ENCODE measurements at regions of chr3 and their contacts with region 1.

Region 1: GRCh38 chr3:119676771-119677640 is at the start of gene COX17:
- DNase-seq: peak; percentile 98
- H3K4me3 Mint-ChIP-seq: peak within 1 kb of the TSS; percentile 87
- H3K27ac Mint-ChIP-seq: peak within 1 kb of the TSS; percentile 96
- H3K4me1 Mint-ChIP-seq: peaks cover 33% of the 10 kb centered on the region
- H3K27me3 Mint-ChIP-seq: no peaks in the 10 kb centered on the region
- total RNA-seq, gene COX17: 61.0 and 70.0 TPM in 2 replicates

Region 2: GRCh38 chr3:118884748-118885206 is 792.2 kb before region 1 on chr3:
- intact Hi-C with region 1: loop called (anchors 2 kb)
- DNase-seq: peak; percentile 92
- H3K4me3 Mint-ChIP-seq: no peak overlapping the region
- H3K27ac Mint-ChIP-seq: no peak overlapping the region
- H3K4me1 Mint-ChIP-seq: peaks cover 2% of the 10 kb centered on the region
- H3K27me3 Mint-ChIP-seq: peaks cover 19% of the 10 kb centered on the region

Region 3: GRCh38 chr3:119145500-119146191 is 531.4 kb before region 1 on chr3 and contains the start of gene TEX55:
- intact Hi-C with region 1: loop called (anchors 2 kb)
- DNase-seq: peak; percentile 66
- H3K4me3 Mint-ChIP-seq: no peak within 1 kb of the TSS
- H3K27ac Mint-ChIP-seq: no peak within 1 kb of the TSS
- H3K4me1 Mint-ChIP-seq: peaks cover 2% of the 10 kb centered on the region
- H3K27me3 Mint-ChIP-seq: no peaks in the 10 kb centered on the region
- total RNA-seq, gene TEX55: not detected in 2 replicates

Region 4: DNA sequence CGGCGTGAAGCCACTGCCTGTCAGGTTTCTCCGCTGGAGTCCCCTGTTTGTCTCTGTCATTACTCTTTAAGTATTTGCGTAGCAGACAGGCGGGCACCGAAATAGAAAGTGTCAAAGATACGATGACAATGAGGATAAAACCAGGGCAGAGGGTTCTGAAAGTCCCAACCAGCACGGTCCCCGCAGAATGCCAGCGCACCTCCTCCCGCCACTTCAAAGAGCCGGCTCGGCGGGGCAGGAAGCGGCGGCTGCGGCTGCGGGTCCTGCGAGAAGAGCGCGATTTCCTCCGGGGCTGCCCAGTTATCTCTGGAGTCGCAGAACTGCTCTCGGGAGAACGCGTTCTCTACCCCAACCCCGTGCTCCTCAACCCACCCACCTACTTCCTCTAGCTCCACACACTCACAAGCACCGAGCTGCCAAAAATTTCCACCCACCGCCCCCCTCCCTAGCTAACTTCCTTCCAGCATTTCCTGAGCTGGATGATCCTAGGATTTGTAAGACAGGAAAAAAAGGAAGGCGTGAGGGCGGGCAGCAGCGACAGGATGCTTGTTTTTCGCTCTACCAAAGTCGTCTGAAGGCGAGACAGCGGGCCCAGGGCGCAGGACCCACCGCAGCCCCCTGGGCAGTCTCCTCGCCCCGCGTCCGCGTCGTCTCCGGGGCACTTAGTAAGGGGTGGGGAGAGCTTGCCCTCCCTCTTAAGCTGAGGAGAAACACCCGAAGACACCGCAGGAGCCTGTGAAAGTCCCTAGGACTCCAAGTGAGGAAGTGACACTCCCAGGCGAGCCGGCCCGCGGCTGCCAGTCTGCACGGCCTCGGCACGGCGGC is 382.9 kb before region 1 on chr3 and contains the start of gene ARHGAP31:
- intact Hi-C with region 1: loop called (anchors 1 kb)
- DNase-seq: peak; percentile 95
- H3K4me3 Mint-ChIP-seq: peak within 1 kb of the TSS; percentile 86
- H3K27ac Mint-ChIP-seq: peak within 1 kb of the TSS; percentile 89
- H3K4me1 Mint-ChIP-seq: peaks cover 37% of the 10 kb centered on the region
- H3K27me3 Mint-ChIP-seq: peaks cover 14% of the 10 kb centered on the region
- total RNA-seq, gene ARHGAP31: 9.5 and 11.0 TPM in 2 replicates

Region 5: DNA sequence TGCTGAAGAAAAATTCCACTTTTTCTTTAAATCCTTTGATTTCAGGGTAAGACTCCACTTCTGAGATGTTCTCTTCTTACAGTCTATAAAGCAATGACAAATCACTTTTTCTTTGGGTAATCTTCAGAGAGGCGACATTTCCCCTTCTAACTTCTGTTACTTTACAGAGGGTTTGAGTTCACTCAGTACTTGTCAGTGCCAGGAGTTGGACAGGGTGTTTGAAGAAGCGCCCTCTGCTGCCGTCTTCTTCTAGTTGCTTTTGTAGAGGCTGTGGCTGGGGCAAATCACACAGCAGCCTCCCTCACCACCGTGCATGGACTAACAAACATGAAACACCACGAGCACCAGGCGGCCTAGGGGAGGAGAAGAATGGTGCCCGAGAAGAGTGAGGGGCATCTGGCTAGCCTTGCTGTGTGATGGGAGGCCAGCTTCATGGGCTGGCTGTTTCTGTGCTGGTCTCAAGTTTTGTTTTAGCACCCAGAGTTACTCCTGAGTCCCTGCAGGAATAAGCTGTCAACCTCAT is 117.5 kb before region 1 on chr3 and contains the start of gene CD80:
- intact Hi-C with region 1: loop called (anchors 1 kb)
- DNase-seq: peak; percentile 92
- H3K4me3 Mint-ChIP-seq: peak within 1 kb of the TSS; percentile 80
- H3K27ac Mint-ChIP-seq: peak within 1 kb of the TSS; percentile 77
- H3K4me1 Mint-ChIP-seq: peaks cover 53% of the 10 kb centered on the region
- H3K27me3 Mint-ChIP-seq: no peaks in the 10 kb centered on the region
- total RNA-seq, gene CD80: 12.5 and 13.0 TPM in 2 replicates

Region 6: DNA sequence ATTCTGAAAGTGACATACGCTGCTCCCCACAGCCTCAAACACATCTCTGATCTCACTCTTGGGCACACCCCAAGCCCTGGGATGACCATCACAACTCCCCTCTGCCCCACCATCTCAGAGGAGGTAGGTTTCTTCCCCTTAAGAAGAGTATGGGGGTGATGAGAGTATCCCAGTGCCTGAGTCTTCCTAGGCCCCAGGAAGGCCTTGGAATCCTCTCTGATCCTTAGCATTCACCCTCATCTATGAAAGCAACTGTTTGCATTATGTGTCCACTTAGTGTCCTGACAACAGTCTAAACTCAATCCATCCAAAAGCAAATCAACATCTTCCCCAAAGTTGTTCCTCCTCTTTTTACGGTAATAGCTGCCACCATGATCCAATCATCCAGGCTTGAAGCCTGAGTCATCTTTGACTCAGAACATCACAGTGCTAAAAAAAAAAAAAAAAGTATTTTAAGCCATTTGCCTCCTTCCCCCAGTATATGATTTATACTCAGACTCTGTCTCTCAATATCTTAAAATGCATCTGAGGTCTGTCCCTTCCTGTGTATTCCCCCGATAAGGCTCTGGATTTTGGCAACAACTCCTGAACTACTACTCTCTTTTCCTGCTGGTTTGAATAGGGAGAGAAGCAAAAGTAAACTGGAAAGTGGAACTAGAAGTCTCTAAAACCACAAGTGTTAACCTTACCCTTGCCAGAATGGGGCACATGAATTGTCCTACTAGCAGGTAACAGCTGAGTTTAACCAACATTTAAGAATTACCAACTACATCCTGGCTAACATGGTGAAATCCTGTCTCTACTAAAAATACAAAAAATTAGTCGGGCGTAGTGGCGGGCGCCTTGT is 39.1 kb before region 1 on chr3:
- intact Hi-C with region 1: loop called (anchors 1 kb)
- DNase-seq: peak; percentile 68
- H3K4me3 Mint-ChIP-seq: peak overlapping the region; percentile 75
- H3K27ac Mint-ChIP-seq: peak overlapping the region; percentile 95
- H3K4me1 Mint-ChIP-seq: peaks cover 36% of the 10 kb centered on the region
- H3K27me3 Mint-ChIP-seq: no peaks in the 10 kb centered on the region

Measured in activated CD4-positive, alpha-beta T cell treated with anti-CD3 and anti-CD28 coated beads, Interleukin-2, amount 10 ng/mL, durations not matched to agents 24 days and 14 days (primary cell).